Posterior cingulate gyrus (tissue), 11 donors: ENCODE measurements at regions of chr12 and their contacts with region 1.

Region 1: DNA sequence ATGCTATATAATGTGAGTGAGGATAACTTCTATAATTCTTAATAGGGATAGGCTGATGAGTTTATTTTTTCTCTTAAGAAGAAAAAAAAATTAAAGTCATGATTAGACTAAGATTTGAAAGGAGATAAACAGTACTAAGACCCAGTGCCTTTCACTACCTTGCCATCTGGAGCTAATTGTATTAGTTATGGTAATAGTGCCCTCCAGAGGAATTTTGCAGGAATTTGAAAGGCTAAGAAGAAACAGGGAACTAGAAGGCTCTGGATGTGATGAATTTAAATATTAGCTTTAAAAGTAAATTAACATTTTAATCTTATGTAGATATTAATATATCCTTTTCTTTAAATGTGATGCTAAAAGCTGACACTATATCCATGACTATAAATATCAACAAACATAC is 36.6 kb upstream of the PIK3C2G start:
- DNase-seq: no peak

Region 2: GRCh38 chr12:18139989-18140596 is 84.7 kb before region 1 on chr12:
- intact Hi-C with region 1: loop called (anchors 5 kb)
- DNase-seq: no peak